Endothelial cell of umbilical vein (primary cell): ENCODE measurements at regions of chr4 and their contacts with region 1.

Region 1: DNA sequence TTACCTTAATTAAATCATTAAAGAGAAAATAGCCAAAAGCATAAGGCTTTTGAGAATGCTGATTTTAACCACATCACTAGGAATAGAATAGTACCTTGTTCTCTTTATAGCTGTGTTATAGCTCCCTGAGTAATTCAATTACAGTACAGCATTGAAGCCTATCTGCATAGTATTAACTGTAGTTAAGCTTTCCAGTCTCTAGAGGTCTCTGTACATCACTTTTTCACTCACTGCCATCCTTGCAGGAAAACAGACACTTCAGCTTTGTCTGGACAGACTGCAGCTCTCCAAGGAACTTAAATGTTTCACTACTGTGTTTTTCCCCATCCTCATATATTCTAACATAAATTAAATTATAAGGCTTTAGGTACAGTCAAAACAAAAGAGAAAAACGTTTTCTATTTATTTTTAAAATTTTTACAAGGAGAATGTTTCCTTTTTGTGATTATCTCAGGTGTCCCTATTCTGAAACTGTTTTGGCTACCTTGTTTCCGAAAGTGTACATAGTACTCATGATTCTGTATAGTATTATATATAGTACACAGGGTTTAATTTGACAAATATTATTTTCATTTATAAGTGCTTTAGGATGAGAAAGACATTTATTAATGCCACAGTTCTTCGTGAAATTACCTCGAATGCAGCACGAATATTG is 407.9 kb downstream of the PCDH18 start:
- DNase-seq: peak; percentile 35
- H3K4me3 ChIP-seq: no peak overlapping the region
- H3K27ac ChIP-seq: no peak overlapping the region
- H3K4me1 ChIP-seq: no peaks in the 10 kb centered on the region
- H3K27me3 ChIP-seq: no peaks in the 10 kb centered on the region
- CTCF ChIP-seq: peak in 1 of 2 donors; percentile 42
- POLR2A ChIP-seq: no peak

Region 2: DNA sequence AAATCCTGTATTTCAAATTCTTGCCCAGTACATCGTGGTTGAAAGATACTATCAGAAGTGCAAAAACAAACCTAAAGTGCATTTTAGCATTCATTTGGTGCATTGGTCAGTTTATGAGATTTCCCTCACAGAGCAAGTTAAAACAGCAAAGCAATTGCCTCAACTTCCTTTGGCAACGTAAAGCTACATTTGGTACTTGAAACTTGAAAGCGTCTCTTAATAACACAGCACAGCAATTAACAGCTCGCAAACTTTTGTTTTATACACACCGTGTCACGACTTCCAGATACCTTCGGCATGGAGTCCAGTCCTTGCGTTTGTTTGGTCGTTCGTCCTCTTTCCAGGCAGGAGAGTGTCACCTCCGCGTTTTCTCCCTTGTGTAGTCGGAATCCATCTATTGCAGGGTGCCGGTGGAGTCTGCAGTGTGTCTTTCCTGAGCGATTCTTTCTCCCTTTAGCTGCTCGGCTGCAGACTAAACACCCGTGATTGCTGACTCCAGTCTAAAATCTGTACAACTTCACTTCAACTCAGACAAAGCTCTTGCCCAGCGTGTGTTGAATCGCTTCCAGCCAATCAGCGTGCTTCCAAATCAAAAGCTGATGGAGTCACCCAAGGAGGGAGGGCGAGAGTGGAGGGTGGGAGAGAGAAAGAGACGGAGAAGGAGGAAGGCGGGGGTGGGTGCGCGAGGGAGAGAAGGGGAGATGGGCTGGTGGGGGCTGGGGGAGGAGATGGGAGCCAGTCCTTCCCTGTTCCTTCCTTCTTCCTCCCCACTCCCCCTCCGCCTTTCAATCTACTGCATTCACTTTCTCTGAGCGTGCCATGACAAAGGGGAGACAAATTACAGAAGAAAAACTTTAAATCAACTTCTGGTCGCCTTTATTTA is 407.8 kb after region 1 on chr4 and contains the start of gene PCDH18:
- CTCF ChIA-PET with region 1: interaction called, 3 read pairs
- POLR2A ChIA-PET with region 1: no interaction called
- dilution Hi-C with region 1: no loop called
- intact Hi-C with region 1: loop called (anchors 1 kb)
- DNase-seq: peak; percentile 90
- H3K4me3 ChIP-seq: peak within 1 kb of the TSS; percentile 38 to 94 (median 58)
- H3K27ac ChIP-seq: peak within 1 kb of the TSS; percentile 23
- H3K4me1 ChIP-seq: peaks cover 10% of the 10 kb centered on the region
- H3K27me3 ChIP-seq: no peaks in the 10 kb centered on the region
- CTCF ChIP-seq: no peak
- POLR2A ChIP-seq: no peak
- total RNA-seq, gene PCDH18: 1.4 and 1.5 TPM in 2 replicates

Region 3: DNA sequence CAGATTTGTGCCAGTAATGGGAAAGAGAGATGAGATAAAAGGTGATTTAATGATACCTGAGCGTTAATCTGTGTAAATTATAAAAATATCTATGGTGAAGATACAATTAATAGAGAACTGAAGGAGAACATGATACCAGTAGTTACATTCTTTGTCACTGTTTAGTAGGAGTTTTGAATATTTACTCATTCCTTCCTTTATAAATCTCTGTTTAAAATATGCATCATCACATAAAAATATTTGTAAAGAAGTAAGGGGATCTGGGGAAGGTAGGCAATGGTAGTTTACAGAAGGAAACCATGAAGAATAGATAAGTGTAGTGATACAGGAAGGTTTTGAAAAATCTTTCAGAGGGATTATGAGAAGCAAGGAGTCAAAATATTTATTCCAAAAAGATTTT is 598.5 kb after region 1 on chr4:
- CTCF ChIA-PET with region 1: no interaction called
- POLR2A ChIA-PET with region 1: no interaction called
- dilution Hi-C with region 1: no loop called
- intact Hi-C with region 1: loop called (anchors 10 kb)
- DNase-seq: no peak
- H3K4me3 ChIP-seq: no peak overlapping the region
- H3K27ac ChIP-seq: no peak overlapping the region
- H3K4me1 ChIP-seq: no peaks in the 10 kb centered on the region
- H3K27me3 ChIP-seq: no peaks in the 10 kb centered on the region
- CTCF ChIP-seq: no peak
- POLR2A ChIP-seq: no peak

Region 4: DNA sequence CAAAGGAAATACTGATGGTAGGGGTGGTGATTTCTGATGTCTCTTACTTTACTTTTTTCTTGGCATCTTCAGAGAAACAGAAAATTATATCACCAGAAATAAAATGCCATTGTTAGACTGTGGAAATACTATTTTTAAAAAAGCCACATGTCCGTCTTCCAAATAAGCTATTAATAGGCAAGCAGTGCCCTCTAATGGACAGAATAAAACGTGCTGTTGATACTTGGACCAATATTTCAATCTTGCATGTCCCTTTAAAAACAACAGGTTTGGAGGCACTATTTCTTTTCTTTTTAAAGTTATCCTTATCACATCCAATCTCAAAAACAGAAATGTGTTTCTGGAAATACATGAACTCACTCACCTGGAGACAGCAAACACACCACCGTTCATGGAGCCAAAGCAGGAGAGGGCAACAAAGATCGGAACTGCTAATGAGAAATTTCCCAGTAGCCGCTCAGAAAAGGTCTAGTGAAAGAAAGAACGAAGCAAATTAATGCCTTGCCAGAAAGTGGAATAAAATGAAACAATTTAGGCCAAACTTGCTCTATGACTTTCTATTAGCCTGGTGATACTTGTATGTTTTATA is 1058.5 kb after region 1 on chr4:
- CTCF ChIA-PET with region 1: interaction called, 10 read pairs
- POLR2A ChIA-PET with region 1: no interaction called
- dilution Hi-C with region 1: no loop called
- intact Hi-C with region 1: no loop called
- DNase-seq: peak; percentile 85
- H3K4me3 ChIP-seq: no peak overlapping the region
- H3K27ac ChIP-seq: no peak overlapping the region
- H3K4me1 ChIP-seq: peaks cover 14% of the 10 kb centered on the region
- H3K27me3 ChIP-seq: no peaks in the 10 kb centered on the region
- CTCF ChIP-seq: peak; percentile 43 to 48
- POLR2A ChIP-seq: no peak